ENCODE measurements at regions of chr1 and their contacts with region 1.

Region 1: GRCh38 chr1:173297798-173298391 is 90.8 kb upstream of the TNFSF4 start:
- DNase-seq: peak; percentile 67
- ATAC-seq: peak; percentile 94
- H3K4me3 Mint-ChIP-seq: no peak overlapping the region
- H3K27ac Mint-ChIP-seq: no peak overlapping the region
- H3K4me1 Mint-ChIP-seq: peaks cover 27% of the 10 kb centered on the region
- H3K27me3 Mint-ChIP-seq: peaks cover 6% of the 10 kb centered on the region

Region 2: DNA sequence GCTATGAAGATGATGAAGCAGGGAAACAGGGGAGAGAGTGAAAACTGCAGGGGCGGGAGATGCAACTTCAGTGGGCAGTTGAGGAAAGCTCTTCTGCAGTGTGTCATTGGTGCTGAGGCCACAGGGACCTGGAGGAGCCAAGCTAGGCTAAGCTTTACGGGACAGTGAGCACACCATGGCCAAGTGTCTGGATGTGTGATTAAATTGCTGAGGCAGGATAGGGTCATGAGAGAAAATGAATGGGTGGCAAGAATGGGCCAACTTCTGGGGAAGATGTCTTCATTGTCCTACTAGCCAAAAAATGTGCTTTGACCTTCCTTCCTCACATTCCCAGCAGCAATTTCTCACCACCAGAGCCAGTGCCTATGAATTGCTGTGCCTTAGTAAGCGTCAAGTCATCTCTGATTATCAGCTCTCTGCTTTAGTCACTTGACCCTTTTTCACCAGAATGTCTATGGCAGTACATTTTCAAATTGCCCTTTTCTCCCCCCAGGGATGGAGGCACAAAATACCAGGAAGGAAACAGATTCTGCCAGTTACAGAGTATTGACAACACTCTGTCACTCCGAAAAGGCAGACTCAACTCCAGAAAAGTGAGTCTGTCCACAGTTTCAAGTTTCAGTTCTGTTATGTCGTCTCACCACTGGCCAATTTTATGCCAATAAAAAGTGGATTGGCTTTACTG is 414.6 kb before region 1 on chr1:
- CTCF ChIA-PET with region 1: no interaction called
- POLR2A ChIA-PET with region 1: no interaction called
- intact Hi-C with region 1: loop called in 1 of 2 experiments (anchors 5 kb)
- DNase-seq: peak; percentile 25
- ATAC-seq: peak; percentile 83
- H3K4me3 Mint-ChIP-seq: no peak overlapping the region
- H3K27ac Mint-ChIP-seq: peak overlapping the region; percentile 38
- H3K4me1 Mint-ChIP-seq: peaks cover 14% of the 10 kb centered on the region
- H3K27me3 Mint-ChIP-seq: peaks cover 45% of the 10 kb centered on the region

Region 3: DNA sequence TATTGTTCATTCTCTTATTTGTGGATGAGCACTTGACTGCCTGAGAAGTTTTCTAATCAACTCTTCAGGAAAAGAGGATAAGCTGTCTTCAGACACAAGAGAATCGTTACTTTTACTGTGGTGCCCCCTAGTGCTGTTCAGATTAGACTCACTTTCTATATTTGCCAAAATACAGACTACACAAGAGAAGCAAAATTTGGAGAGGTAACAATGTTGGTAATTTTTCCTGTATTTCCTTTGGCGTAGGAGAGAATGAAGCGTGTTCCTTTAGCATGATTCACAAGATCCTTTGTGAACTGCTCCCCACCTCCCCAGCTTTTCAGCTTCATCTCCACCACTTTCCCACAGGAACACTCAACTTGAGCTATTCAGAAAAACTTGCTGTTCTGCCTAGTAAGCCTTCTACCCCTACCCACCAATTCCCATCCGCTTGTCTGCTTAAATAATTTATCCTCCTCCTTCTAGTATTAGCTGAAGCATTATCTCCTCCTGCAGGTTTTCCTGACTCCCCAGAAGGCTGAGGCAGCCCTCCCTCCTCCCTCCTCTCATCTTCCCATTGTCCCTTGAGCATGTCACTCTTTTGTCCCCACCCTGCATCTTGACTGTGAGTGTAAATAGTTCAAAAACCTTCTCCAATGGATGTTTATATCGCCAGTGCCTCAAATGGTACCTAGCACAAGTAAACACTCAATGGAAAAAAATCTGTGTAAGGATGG is 95.3 kb before region 1 on chr1:
- CTCF ChIA-PET with region 1: no interaction called
- POLR2A ChIA-PET with region 1: no interaction called
- intact Hi-C with region 1: loop called in 1 of 2 experiments (anchors 5 kb)
- DNase-seq: peak; percentile 14
- ATAC-seq: no peak
- H3K4me3 Mint-ChIP-seq: no peak overlapping the region
- H3K27ac Mint-ChIP-seq: no peak overlapping the region
- H3K4me1 Mint-ChIP-seq: peaks cover 33% of the 10 kb centered on the region
- H3K27me3 Mint-ChIP-seq: peaks cover 13% of the 10 kb centered on the region

Region 4: GRCh38 chr1:173276922-173277800 is 20.7 kb before region 1 on chr1:
- CTCF ChIA-PET with region 1: interaction called, 3 read pairs
- POLR2A ChIA-PET with region 1: no interaction called
- intact Hi-C with region 1: loop called (anchors 2 kb)
- DNase-seq: peak; percentile 11
- ATAC-seq: peak; percentile 96
- H3K4me3 Mint-ChIP-seq: no peak overlapping the region
- H3K27ac Mint-ChIP-seq: no peak overlapping the region
- H3K4me1 Mint-ChIP-seq: peaks cover 9% of the 10 kb centered on the region
- H3K27me3 Mint-ChIP-seq: no peaks in the 10 kb centered on the region

Region 5: DNA sequence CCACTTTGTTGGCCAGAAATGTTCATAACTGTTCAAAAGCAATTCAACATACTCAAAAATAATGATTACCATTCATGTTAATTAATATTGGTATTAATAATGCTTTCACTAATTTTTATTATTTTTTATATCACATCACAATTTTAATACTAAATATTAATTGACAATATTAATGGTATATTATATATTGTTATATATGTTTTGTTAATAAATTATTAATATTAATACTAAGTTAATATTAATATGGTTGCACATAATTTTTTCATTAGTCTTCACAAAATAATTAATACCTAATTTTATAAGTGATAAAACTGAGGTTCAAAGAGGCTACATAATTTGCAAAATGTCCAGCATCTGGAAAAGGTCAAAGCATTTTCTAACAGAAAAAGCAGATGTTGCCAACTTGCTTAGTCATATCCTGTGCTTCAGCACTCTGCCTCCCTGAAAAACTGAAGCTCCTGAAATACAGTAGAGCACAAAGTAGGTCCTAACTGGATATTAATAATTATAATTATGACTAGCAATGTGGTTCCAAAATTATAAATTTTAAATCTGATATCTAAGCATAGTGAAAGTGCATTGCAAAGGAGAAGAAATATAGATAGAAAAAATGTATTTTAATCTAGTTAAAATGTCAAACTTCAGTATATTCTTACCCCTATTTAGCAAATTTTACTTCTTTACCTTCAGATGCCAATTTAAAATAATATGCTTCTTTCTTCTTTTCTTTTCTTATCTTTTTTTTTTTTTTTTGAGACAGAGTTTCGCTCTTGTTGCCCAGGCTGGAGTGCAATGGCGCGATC is 32.5 kb after region 1 on chr1:
- CTCF ChIA-PET with region 1: interaction called, 3 read pairs
- POLR2A ChIA-PET with region 1: no interaction called
- intact Hi-C with region 1: loop called (anchors 1 to 2 kb)
- DNase-seq: no peak
- ATAC-seq: no peak
- H3K4me3 Mint-ChIP-seq: no peak overlapping the region
- H3K27ac Mint-ChIP-seq: no peak overlapping the region
- H3K4me1 Mint-ChIP-seq: peaks cover 29% of the 10 kb centered on the region
- H3K27me3 Mint-ChIP-seq: no peaks in the 10 kb centered on the region

Measured in activated CD4-positive, alpha-beta T cell treated with anti-CD3 and anti-CD28 coated beads for 36 hours (primary cell).